ENCODE measurements at regions of chr6 and their contacts with region 1.

Region 1: DNA sequence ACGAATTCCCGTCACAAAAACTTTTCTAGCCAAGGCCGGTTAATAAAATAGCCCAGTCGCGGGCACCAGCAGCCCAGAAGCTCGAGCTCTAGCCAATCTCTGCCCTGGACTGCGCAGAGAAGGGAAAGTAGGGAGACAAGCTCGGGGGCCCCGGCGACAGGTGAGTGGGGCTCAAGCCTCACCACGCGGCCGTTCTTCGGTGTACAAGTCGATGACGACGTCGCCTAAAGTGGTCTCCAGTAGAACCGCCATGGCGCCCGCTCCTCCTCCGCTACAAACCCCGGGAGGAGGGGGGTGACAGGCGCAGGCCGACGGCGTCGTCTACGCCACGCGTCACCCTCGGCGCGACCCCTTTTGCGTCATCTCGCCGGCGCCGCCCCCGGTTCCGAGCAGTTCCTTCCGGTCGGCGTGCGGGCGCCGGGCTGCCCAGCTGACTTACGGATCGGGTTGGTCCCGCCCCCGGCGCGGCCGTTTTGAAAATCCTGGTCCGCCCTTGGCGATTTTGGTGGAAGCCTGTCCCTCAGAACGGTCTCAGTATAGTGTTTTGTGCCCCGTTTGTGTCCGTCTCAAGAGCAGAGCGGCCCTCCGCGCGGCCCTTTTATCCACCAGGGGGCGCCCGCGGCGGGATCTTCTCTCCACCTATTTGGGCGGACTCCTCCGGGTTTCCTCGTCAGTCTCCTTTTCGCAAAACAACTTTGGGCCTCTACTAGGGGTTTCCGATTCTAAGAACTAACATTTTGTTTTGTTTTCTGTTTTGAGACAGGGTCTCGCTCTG is at the start of gene PPIL4:
- DNase-seq: peak; percentile 96
- H3K4me3 Mint-ChIP-seq: peak within 1 kb of the TSS; percentile 98
- H3K27ac Mint-ChIP-seq: peak within 1 kb of the TSS; percentile 99
- H3K4me1 Mint-ChIP-seq: peaks cover 31% of the 10 kb centered on the region
- H3K27me3 Mint-ChIP-seq: peaks cover 4% of the 10 kb centered on the region
- total RNA-seq, gene PPIL4: 25.0 and 26.1 TPM in 2 replicates

Region 2: DNA sequence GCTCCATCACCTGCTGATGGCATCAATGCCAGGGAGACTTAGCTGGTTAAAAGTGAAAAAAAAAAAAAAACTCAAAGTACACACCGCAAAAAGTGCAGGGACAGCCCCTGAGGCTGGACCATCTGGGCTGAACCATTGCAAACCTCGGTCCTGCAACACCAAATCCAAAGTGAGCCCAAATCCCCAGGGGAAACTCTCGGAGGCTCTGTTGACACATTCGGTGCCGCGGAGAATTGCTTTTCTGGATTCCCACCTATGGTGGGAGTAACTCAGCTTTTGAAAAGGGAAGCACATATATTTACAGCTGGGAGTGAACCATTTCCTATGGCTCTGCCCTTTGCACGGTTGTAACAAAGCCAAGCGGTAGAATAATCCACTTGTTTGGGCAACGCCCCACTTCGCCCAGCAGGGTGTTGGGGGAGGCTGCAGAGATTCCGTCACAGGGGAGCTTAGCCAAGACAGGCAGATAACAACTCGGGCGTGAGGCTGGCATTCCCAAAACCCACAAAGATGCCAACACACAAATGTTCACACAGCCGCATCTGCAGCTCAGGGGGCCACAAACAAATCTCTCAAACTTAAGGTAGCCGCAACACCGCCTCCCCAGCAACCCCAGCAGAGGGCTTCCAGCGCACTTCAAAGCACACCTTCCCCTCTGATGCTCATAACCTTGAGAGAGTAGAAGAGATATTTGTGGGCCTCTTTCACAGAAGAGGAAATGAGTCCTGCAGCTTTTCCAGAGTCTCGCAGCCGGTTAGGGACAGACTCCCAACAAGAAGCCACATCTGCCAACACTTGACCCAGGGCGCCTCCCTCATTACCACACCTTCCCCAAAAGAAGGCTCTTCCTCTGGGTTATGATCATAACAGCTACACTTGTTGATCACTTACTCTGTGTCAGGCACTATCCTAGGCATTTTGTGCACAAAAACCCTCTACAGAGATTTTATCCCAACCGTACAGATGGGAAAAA is 72.6 kb before region 1 on chr6:
- intact Hi-C with region 1: no loop called
- DNase-seq: no peak
- H3K4me3 Mint-ChIP-seq: no peak overlapping the region
- H3K27ac Mint-ChIP-seq: peak overlapping the region; percentile 34
- H3K4me1 Mint-ChIP-seq: peaks cover 41% of the 10 kb centered on the region
- H3K27me3 Mint-ChIP-seq: no peaks in the 10 kb centered on the region

Region 3: DNA sequence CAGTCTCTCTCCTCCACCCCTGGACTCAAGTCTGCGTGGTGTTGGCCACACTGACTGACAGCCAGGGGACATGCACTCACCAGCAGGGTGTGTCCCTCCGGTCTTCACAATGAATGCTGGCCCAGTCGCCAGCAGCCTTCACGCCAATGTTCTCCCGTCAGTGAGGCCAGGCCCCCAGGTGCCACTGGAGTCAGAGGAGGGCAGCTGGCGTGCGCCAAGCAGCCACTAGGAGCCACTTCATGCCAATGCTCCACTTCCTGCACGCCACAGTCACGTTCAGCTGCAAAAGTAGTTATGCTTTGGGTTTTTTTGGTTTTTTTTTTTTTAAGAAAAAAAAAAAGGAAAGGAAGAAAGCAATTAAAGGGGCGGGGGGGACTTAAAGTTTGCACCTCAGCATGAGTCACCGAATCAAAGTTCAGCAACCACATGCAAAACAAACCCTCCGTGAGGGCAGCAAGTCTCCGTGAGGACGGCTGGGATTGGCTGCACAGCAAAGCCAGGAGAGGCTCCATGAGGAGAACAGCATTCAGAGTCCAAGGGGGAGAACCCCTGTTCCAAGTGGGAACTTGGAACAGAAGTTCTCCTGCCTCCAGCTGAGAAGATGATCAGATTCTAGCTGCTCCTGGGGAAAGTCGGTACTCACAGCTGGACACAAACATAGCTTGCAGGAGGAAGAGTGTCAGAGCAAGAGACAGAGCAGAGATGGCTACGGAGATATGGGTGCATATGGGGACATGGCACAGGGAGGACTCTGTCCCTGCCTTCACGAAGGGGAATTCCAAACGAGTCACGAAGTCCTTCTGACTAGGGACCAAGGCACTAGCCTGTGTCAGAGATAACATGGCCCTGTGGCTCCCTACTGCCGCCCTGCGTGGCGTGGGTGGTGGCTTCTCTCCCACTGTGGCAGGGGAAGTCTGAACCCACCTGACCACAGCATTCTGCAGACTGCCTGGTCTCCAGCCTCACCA is 60.9 kb before region 1 on chr6 and contains the start of gene ZC3H12D:
- intact Hi-C with region 1: no loop called
- DNase-seq: peak; percentile 76
- H3K4me3 Mint-ChIP-seq: peak within 1 kb of the TSS; percentile 92
- H3K27ac Mint-ChIP-seq: peak within 1 kb of the TSS; percentile 99
- H3K4me1 Mint-ChIP-seq: peaks cover 74% of the 10 kb centered on the region
- H3K27me3 Mint-ChIP-seq: no peaks in the 10 kb centered on the region
- total RNA-seq, gene ZC3H12D: 94.7 and 96.7 TPM in 2 replicates

Region 4: DNA sequence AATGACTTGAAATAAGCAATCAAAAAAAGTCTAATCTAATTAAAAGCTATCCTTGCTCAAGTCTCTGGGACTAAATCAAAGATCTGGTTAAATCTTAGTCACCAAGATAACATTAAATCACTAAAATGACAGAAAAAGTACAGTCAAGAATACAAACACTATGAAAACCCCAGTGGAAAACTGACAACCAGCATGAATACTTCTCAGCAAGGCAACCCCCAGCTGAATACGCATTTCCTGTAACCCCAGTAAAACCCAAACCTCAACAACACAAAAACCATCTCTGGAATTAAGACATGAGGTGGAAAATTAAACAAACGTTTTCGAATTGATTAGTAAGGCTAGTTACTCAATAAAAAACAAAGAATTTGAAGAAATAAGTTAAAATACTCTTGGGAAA is 37.5 kb before region 1 on chr6:
- intact Hi-C with region 1: loop called (anchors 2 kb)
- DNase-seq: peak; percentile 39
- H3K4me3 Mint-ChIP-seq: peak overlapping the region; percentile 13
- H3K27ac Mint-ChIP-seq: peak overlapping the region; percentile 81
- H3K4me1 Mint-ChIP-seq: peaks cover 53% of the 10 kb centered on the region
- H3K27me3 Mint-ChIP-seq: no peaks in the 10 kb centered on the region

Region 5: DNA sequence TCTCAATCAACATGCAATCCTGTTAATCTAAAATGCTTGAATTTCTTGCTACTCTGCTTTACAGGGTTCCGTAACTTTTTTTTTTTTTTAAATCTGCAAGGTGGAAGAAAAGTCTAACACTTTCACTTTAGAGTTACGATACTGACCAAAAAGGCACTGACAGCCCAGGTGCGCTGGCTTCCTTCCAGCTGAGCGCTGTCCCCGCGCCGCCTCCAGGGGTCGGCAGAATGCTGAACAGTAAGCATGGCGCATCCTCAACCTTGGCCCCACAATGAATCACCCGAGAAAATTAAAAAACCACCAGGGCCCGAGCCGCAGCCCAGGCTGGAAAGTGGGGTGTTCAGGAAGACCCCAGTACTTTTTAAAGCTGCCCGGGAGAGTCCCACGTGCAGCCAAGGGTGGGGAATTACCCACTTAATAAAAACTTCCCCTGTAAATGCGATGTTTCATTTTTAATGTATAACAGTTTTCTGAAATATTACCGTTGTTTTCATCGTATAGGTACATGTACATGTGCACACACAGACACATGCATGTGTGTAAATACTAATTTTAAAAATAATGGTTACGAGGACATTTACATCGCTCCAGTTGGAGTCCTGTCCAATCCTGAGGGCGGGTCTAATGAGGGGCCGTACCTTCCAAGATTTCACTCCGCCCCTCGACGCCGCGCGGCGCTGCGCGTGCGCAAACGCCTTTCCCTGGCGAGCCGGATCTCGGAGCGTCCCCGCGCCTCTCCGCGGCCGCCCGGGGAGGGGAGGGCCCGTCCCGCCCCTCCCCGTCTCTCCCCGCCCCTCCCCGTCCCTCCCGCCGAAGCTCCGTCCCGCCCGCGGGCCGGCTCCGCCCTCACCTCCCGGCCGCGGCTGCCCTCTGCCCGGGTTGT is 19.8 kb after region 1 on chr6 and contains the start of gene GINM1:
- intact Hi-C with region 1: loop called (anchors 1 kb)
- DNase-seq: peak; percentile 97
- H3K4me3 Mint-ChIP-seq: peak within 1 kb of the TSS; percentile 92
- H3K27ac Mint-ChIP-seq: peak within 1 kb of the TSS; percentile 94
- H3K4me1 Mint-ChIP-seq: peaks cover 17% of the 10 kb centered on the region
- H3K27me3 Mint-ChIP-seq: peaks cover 7% of the 10 kb centered on the region
- total RNA-seq, gene GINM1: 15.4 and 18.6 TPM in 2 replicates

Region 6: GRCh38 chr6:149717588-149718458 is 171.9 kb after region 1 on chr6 and contains the start of gene LATS1:
- intact Hi-C with region 1: loop called (anchors 1 kb)
- DNase-seq: peak; percentile 90
- H3K4me3 Mint-ChIP-seq: peak within 1 kb of the TSS; percentile 93
- H3K27ac Mint-ChIP-seq: peak within 1 kb of the TSS; percentile 91
- H3K4me1 Mint-ChIP-seq: peaks cover 31% of the 10 kb centered on the region
- H3K27me3 Mint-ChIP-seq: no peaks in the 10 kb centered on the region
- total RNA-seq, gene LATS1: 33.1 and 34.0 TPM in 2 replicates

Region 7: GRCh38 chr6:149863697-149864577 is 318.0 kb after region 1 on chr6 and contains the start of gene LRP11:
- intact Hi-C with region 1: loop called (anchors 2 kb)
- DNase-seq: peak; percentile 80
- H3K4me3 Mint-ChIP-seq: peak within 1 kb of the TSS; percentile 80
- H3K27ac Mint-ChIP-seq: no peak within 1 kb of the TSS
- H3K4me1 Mint-ChIP-seq: peaks cover 35% of the 10 kb centered on the region
- H3K27me3 Mint-ChIP-seq: peaks cover 23% of the 10 kb centered on the region
- total RNA-seq, gene LRP11: 3.5 and 5.1 TPM in 2 replicates

Region 8: GRCh38 chr6:150004783-150005717 is 459.1 kb after region 1 on chr6:
- intact Hi-C with region 1: loop called (anchors 10 kb)
- DNase-seq: peak; percentile 92
- H3K4me3 Mint-ChIP-seq: peak overlapping the region; percentile 82
- H3K27ac Mint-ChIP-seq: peak overlapping the region; percentile 87
- H3K4me1 Mint-ChIP-seq: peaks cover 62% of the 10 kb centered on the region
- H3K27me3 Mint-ChIP-seq: peaks cover 22% of the 10 kb centered on the region